ENCODE measurements at regions of chr12 and their contacts with region 1.

Region 1: GRCh38 chr12:1517007-1517406 is 77.4 kb downstream of the FBXL14 start:
- DNase-seq: peak; percentile 85
- ATAC-seq: peak; percentile 88
- H3K4me3 Mint-ChIP-seq: no peak overlapping the region
- H3K27ac Mint-ChIP-seq: no peak overlapping the region
- H3K4me1 Mint-ChIP-seq: peaks cover 12% of the 10 kb centered on the region
- H3K27me3 Mint-ChIP-seq: no peaks in the 10 kb centered on the region; the same call in 1 of the 2 replicates
- CTCF ChIP-seq: peak; percentile 88

Region 2: DNA sequence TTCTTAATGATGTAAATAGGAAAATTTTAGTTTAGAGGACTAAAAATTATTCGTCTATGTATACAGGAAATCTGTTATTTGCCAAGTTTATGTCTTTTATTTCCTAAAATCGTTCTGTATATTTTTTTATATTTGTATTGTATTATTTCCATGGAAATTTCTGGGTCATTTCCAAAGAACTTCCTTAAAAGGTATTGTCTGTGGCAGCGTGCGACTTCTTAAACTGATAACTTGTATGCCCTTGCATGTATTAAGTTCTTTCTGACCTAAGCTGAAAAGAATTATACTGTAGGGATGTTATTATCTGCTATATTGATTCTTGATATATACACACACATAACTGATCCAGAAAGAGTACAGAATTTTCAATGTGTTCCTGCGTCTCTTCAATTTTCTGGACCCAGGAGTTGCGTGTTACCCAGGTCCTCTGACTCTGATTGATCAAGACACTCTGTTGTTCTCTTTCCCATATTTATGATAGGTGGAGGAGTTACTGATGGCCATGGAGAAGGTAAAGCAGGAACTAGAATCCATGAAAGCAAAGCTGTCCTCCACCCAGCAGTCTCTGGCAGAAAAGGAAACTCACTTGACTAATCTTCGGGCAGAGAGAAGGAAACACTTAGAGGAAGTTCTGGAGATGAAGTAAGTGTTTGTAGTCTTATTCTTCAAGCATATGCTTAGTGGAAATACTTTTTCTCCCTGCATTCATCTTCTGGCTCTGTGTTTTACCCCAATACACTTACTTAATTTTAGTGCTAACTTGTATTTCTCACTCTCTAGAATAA is 227.4 kb before region 1 on chr12:
- CTCF ChIA-PET with region 1: no interaction called
- POLR2A ChIA-PET with region 1: no interaction called
- DNase-seq: no peak
- ATAC-seq: no peak
- H3K4me3 Mint-ChIP-seq: no peak overlapping the region
- H3K27ac Mint-ChIP-seq: no peak overlapping the region
- H3K4me1 Mint-ChIP-seq: no peaks in the 10 kb centered on the region
- H3K27me3 Mint-ChIP-seq: no peaks in the 10 kb centered on the region
- CTCF ChIP-seq: no peak

Region 3: GRCh38 chr12:1457901-1458300 is 59.1 kb before region 1 on chr12:
- CTCF ChIA-PET with region 1: no interaction called
- POLR2A ChIA-PET with region 1: no interaction called
- DNase-seq: no peak
- ATAC-seq: no peak
- H3K4me3 Mint-ChIP-seq: no peak overlapping the region
- H3K27ac Mint-ChIP-seq: no peak overlapping the region
- H3K4me1 Mint-ChIP-seq: peaks cover 4% of the 10 kb centered on the region
- H3K27me3 Mint-ChIP-seq: no peaks in the 10 kb centered on the region
- CTCF ChIP-seq: no peak

Region 4: GRCh38 chr12:1529862-1530591 is 13.0 kb after region 1 on chr12:
- CTCF ChIA-PET with region 1: interaction called, 32 read pairs
- POLR2A ChIA-PET with region 1: no interaction called
- DNase-seq: peak; percentile 42
- ATAC-seq: peak; percentile 43
- H3K4me3 Mint-ChIP-seq: peak overlapping the region; percentile 82
- H3K27ac Mint-ChIP-seq: no peak overlapping the region
- H3K4me1 Mint-ChIP-seq: peaks cover 14% of the 10 kb centered on the region
- H3K27me3 Mint-ChIP-seq: peaks cover 84% of the 10 kb centered on the region
- CTCF ChIP-seq: no peak

Region 5: GRCh38 chr12:1566449-1567135 is 49.6 kb after region 1 on chr12:
- CTCF ChIA-PET with region 1: interaction called, 11 read pairs
- POLR2A ChIA-PET with region 1: no interaction called
- DNase-seq: peak; percentile 30
- ATAC-seq: peak; percentile 74
- H3K4me3 Mint-ChIP-seq: no peak overlapping the region
- H3K27ac Mint-ChIP-seq: no peak overlapping the region
- H3K4me1 Mint-ChIP-seq: peaks cover 7% of the 10 kb centered on the region
- H3K27me3 Mint-ChIP-seq: peaks cover 6% of the 10 kb centered on the region
- CTCF ChIP-seq: no peak

Region 6: GRCh38 chr12:1583421-1584078 is 66.5 kb after region 1 on chr12:
- CTCF ChIA-PET with region 1: interaction called, 44 read pairs
- POLR2A ChIA-PET with region 1: no interaction called
- DNase-seq: peak; percentile 70
- ATAC-seq: peak; percentile 65
- H3K4me3 Mint-ChIP-seq: no peak overlapping the region
- H3K27ac Mint-ChIP-seq: no peak overlapping the region
- H3K4me1 Mint-ChIP-seq: peaks cover 24% of the 10 kb centered on the region
- H3K27me3 Mint-ChIP-seq: peaks cover 56% of the 10 kb centered on the region
- CTCF ChIP-seq: peak; percentile 73